ENCODE measurements at regions of chr7 and their contacts with region 1.

Region 1: GRCh38 chr7:143380255-143380645 is 895 bp upstream of the ZYX start:
- DNase-seq: peak; percentile 75 to 92 (median 85)
- ATAC-seq: peak; percentile 52 to 59
- H3K4me3 Mint-ChIP-seq: peak overlapping the region in 9 of 10 donors; percentile 88 to 95 (median 92)
- H3K27ac Mint-ChIP-seq: peak overlapping the region; percentile 91 to 99 (median 94)
- H3K4me1 Mint-ChIP-seq: peaks cover 34 to 58% (median 44%) of the 10 kb centered on the region in 4 donors
- H3K27me3 Mint-ChIP-seq: no peaks in the 10 kb centered on the region

Region 2: DNA sequence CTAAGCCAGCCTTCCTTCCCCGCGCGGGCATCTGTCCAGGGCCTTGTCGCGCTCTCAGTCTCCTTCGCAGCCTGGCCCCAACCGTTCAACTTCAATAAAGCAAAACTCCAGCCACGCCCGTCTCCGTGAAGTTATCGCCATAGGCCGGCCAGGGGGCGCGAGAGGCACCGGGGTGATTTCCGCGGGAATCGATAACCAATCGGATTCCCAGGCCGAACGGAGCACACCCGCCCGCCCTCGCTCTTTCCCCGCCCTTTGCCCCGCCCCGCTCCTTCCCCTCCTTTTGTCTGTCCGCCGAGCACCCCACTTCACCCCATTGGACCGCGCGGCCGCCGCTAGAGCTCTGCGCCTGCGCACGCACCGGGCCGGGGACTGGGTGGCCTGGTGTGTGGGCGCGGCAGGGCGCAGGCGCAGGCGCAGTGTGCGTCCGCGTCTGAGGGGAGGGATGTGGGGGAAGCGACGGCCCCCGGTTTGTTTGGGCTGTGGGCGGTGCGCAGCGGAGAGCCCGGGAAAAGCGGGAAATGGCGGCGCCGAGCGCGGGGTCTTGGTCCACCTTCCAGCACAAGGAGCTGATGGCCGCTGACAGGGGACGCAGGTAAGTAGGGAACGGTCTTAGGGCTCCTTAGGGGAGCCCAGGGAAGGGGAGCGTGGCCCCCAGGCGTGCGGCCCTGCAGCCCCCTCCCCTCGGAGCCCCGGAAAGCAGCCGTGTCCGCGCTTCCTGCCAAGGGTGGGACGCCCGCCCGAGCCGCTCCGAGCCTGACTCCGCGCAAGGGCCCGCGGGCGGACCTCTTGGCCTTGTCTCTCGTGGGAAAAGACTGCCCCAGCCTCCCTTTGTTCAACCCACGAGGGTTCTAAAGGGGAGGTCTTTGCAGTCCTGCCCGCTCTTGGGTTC is 92.1 kb before region 1 on chr7 and contains the start of gene CASP2:
- POLR2A ChIA-PET with region 1: interaction called, 16 read pairs
- DNase-seq: peak; percentile 93 to 100 (median 99)
- ATAC-seq: peak; percentile 92 to 94
- H3K4me3 Mint-ChIP-seq: peak within 1 kb of the TSS; percentile 91 to 98 (median 96)
- H3K27ac Mint-ChIP-seq: peak within 1 kb of the TSS; percentile 89 to 98 (median 92)
- H3K4me1 Mint-ChIP-seq: peaks cover 32 to 62% (median 59%) of the 10 kb centered on the region in 4 donors
- H3K27me3 Mint-ChIP-seq: no peaks in the 10 kb centered on the region
- polyA plus RNA-seq, gene CASP2: 12.1 to 22.0 (median 14.6) TPM

Region 3: GRCh38 chr7:143318656-143319055 is 61.6 kb before region 1 on chr7:
- POLR2A ChIA-PET with region 1: no interaction called
- DNase-seq: no peak
- ATAC-seq: no peak
- H3K4me3 Mint-ChIP-seq: no peak overlapping the region
- H3K27ac Mint-ChIP-seq: no peak overlapping the region
- H3K4me1 Mint-ChIP-seq: peaks cover 0 to 6% (median under 1%) of the 10 kb centered on the region in 4 donors
- H3K27me3 Mint-ChIP-seq: peaks cover 0 to 5% (median 0%) of the 10 kb centered on the region in 5 donors

Region 4: GRCh38 chr7:143362131-143363015 is 17.9 kb before region 1 on chr7 and contains the start of gene FAM131B:
- POLR2A ChIA-PET with region 1: interaction called, 14 read pairs
- DNase-seq: peak in 6 of 10 donors; percentile 18 to 47 (median 39)
- ATAC-seq: peak; percentile 80 to 86
- H3K4me3 Mint-ChIP-seq: peak within 1 kb of the TSS; percentile 62 to 93 (median 87)
- H3K27ac Mint-ChIP-seq: peak within 1 kb of the TSS in 8 of 10 donors; percentile 7 to 83 (median 64)
- H3K4me1 Mint-ChIP-seq: peaks cover 9 to 17% (median 11%) of the 10 kb centered on the region in 4 donors
- H3K27me3 Mint-ChIP-seq: peaks cover 8 to 33% (median 11%) of the 10 kb centered on the region in 5 donors
- polyA plus RNA-seq, gene FAM131B: 0.44 to 1.1 (median 0.54) TPM

Region 5: DNA sequence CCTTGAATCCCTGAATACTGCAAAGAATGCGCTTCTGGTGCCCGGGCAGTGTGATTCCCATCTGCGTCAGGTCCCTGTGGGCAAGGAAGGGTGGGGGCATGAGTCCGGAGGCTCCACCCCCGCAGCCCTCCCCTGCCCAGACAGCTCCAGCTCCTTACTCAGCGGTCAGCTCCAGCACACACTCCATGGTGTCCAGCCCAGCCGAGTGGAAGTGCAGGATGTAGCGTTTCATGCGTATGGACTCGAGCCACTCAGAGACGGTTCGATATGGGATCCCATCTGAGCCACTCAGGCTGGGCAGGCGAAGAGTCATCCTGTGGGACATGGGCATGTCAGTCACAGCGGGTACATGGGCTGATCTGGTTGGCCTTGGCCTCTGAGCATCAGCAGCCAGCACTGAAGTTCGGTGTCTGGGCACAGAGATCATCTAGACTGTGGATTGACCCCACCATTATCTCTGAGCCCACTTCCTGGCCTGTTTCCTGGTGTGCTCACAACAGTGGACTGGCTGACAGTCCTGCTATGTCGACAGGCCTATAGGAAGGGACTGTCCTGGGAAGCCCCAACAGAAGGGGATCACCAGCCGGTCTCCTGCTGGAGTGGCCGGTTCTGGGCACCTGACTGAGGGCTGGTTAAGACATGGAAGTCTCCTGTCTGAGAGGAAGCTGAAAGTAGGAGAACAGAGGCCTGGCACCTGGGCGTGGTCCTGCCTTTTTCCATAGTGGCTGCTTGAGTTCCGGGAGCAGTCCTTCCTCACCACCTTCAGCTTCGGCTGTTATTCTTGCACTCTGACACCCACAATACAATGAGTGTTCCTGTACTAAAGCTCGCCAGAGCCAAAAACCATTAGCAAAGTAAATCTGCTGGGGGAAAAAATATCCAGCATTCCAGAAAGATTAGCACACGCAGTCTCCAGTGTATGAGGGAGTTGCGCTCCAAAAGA is 11.5 kb after region 1 on chr7:
- POLR2A ChIA-PET with region 1: interaction called, 23 read pairs
- DNase-seq: no peak
- ATAC-seq: no peak
- H3K4me3 Mint-ChIP-seq: no peak overlapping the region
- H3K27ac Mint-ChIP-seq: peak overlapping the region in 6 of 10 donors; percentile 17 to 75 (median 46)
- H3K4me1 Mint-ChIP-seq: peaks cover 14 to 49% (median 26%) of the 10 kb centered on the region in 4 donors
- H3K27me3 Mint-ChIP-seq: no peaks in the 10 kb centered on the region

Measured in naive thymus-derived CD8-positive, alpha-beta T cell (primary cell).